Right cardiac atrium (tissue), 5 donors: ENCODE measurements at regions of chr14 and their contacts with region 1.

Region 1: DNA sequence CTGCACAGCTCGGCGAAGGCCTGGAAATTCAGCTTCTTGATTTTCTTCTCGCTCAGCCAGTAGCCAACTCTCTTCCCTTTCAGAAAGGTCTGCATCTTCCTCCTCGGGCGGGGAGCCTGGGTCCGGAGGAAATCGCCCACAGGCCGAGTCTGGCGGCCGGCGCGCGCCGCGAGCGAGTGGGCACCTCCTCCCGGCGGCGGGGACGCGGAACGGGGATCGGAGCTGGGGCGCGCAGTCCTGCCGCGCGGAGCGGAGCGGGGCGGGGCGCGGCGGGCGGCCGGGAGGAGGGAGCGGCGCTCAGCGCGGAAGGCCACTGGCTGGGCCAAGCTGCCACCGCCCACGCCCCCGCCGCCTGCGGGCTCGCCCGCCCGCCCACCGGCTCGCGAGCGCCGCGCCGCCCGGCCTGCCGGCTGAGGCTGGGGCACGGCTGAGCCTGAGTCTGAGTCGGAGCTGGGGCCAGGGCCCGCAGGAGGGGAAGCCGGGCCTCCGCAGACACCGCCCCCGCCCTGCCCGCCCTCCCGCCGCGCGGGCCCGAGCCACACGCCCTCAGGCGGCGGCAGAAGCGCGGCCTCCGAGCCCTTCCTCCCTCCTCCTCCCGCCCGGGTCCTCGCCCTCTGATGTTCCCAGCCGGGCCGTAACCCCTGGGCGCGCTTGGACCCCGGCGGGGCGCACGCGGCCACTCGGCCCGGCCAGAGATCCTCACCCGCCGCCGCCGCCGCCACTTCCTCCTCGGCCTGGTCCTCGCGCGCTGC is 480 bp downstream of the ITPK1 start:
- DNase-seq: peak; percentile 92 to 96 (median 96)
- ATAC-seq: peak; percentile 93 to 94
- H3K4me3 ChIP-seq: peak overlapping the region; percentile 80
- H3K27ac ChIP-seq: peak overlapping the region; percentile 100
- H3K4me1 ChIP-seq: peaks cover 7% of the 10 kb centered on the region
- H3K27me3 ChIP-seq: no peaks in the 10 kb centered on the region

Region 2: DNA sequence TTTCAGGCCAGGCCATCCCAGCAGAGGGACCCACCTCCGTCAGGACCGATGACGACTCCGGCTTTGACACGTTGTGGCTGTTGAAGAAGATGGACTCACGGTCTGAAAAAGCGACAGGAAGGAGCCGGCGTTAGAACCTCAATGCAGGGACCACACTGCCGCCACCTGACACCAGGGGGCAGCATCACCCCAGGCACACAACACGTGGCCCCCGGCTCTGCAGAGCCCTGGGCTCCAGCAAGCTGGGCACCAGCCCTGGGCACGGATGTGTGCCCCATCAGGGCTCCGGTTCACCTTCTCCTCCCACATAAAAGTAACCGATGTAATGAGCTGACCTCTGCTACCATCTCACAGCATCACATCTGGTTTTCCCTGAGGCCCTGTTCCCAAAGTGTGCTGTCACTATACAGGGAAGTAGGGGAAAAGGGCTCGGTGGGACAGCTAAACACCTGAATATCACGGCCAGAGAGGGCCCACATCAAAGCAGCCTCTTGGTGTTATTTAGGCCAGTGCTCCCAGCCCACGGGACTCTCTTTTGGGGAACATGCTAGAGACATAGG is 163.3 kb before region 1 on chr14:
- intact Hi-C with region 1: loop called in 1 of 4 experiments (anchors 5 kb)
- DNase-seq: peak; percentile 76 to 93 (median 92)
- ATAC-seq: peak; percentile 71 to 82
- H3K4me3 ChIP-seq: no peak overlapping the region
- H3K27ac ChIP-seq: peak overlapping the region; percentile 82
- H3K4me1 ChIP-seq: peaks cover 2% of the 10 kb centered on the region
- H3K27me3 ChIP-seq: no peaks in the 10 kb centered on the region

Region 3: DNA sequence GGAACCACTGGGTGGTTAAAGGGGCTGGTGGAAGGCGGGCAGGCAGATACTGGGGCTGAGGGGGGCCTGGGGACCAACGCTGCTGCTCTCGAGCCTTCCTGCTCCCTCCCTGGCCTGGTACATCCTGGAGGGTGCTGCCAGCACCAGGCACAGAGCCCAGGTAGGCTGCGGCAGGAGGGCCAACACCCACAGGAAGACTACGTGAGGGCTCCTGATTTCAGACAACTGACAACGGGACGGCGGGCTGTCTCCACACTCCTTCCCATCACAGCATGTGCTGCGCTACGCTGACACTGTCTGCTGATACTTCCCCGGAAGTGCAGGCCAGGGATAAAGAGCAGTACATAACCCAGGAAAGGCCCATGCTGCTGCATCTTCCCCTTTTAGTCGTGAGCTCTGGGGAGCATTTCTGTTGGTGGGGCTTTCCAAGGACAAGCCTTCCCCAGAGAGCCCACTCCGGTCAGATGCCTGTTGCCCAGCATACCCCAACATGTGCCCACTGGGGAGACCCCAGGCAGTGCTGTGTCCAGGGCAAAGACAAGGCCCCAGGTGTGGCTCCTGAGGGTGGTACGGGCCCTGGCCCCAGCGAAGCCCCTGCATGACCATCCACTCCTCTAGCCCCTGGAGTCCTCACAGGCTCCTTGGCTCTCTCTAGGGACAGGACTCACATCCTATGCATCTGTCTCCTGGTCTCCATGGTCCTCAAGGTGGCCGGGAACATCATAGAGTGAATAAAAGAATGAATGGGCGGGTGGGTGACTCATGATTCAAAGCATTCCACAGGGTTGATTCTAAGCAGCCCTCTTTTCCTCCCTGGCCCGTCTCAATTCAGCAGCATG is 154.3 kb before region 1 on chr14:
- intact Hi-C with region 1: loop called in 2 of 4 experiments (anchors 5 to 10 kb)
- DNase-seq: peak in 2 of 3 donors; percentile 16 to 42
- ATAC-seq: no peak
- H3K4me3 ChIP-seq: no peak overlapping the region
- H3K27ac ChIP-seq: no peak overlapping the region
- H3K4me1 ChIP-seq: peaks cover 3% of the 10 kb centered on the region
- H3K27me3 ChIP-seq: no peaks in the 10 kb centered on the region

Region 4: DNA sequence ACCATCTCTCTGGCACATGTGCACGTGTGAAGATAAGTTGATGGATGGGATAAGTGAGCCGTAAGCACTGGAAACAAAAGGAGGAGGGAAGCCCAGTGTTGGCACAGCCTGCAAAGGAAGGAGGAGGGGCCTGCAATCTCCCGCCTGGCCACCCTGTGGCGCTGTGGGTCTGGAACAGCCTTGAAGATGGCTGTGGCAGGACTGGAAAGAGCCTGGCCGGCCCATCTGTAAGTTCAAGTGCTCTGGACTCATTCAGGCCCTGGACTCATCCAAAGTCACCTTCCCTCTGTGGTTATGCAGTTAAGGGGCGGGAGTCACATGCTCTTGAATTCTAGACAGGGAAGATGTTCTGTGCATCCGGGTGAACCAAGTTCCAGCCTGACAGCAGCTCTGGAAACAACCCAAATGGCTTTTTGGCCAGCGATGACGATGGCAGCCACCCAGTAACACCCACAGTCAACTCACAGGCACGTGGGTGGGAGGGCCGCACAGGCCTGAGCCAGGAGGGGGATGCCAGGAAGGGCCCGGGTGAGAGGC is 141.9 kb before region 1 on chr14:
- intact Hi-C with region 1: loop called in 3 of 4 experiments (anchors 5 to 10 kb)
- DNase-seq: peak; percentile 75 to 93 (median 89)
- ATAC-seq: peak; percentile 91
- H3K4me3 ChIP-seq: no peak overlapping the region
- H3K27ac ChIP-seq: peak overlapping the region; percentile 89
- H3K4me1 ChIP-seq: peaks cover 5% of the 10 kb centered on the region
- H3K27me3 ChIP-seq: no peaks in the 10 kb centered on the region

Region 5: DNA sequence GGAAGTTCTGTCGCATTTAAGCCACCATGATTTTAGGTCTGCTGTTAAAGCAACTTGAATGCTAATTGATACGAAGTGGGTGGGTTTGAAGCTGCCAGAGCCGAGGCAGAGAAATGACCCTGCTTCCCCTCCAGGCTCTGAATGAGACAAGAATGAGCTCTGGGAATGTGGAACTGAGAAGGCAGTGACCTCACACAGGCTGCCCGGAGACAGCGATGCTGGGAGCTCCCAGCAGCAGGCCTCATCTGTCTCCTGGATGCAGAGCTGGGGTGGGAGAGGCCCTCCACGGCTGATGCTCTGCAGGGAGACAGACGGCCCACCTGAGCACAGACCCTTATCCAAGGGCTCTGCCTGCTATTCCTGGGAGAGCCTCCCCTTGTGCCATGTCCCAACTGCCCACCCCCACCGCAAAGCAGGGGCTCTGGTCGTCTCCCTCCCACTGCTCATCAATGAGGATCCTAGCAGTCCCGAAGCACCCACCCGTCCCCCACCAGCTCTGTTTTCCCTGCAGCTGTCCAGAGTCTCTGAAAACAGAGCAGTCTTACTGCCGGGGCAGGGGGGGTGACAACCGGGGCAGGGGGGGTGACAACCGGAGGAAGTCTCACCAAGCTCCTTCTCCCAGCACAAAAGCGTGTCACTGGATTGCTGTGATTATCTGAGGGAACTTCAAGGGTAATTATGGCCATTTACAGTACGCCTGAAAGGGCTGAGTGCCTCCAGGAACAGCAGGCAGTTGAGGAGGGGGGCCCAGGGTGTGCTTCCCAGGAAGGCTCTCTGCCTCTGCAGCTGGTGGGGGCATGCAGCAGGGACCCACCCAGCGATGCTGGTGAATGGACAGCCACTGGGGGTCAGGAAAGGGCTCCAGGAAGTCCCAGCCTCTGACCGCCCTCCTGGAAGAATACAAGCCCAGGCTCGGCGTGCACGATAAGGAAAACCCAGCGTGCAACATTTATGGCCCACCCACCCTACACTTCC is 124.5 kb before region 1 on chr14:
- intact Hi-C with region 1: no loop called
- DNase-seq: peak in 2 of 3 donors; percentile 50 to 69
- ATAC-seq: peak in 1 of 2 donors; percentile 21
- H3K4me3 ChIP-seq: no peak overlapping the region
- H3K27ac ChIP-seq: no peak overlapping the region
- H3K4me1 ChIP-seq: peaks cover 23% of the 10 kb centered on the region
- H3K27me3 ChIP-seq: no peaks in the 10 kb centered on the region

Region 6: DNA sequence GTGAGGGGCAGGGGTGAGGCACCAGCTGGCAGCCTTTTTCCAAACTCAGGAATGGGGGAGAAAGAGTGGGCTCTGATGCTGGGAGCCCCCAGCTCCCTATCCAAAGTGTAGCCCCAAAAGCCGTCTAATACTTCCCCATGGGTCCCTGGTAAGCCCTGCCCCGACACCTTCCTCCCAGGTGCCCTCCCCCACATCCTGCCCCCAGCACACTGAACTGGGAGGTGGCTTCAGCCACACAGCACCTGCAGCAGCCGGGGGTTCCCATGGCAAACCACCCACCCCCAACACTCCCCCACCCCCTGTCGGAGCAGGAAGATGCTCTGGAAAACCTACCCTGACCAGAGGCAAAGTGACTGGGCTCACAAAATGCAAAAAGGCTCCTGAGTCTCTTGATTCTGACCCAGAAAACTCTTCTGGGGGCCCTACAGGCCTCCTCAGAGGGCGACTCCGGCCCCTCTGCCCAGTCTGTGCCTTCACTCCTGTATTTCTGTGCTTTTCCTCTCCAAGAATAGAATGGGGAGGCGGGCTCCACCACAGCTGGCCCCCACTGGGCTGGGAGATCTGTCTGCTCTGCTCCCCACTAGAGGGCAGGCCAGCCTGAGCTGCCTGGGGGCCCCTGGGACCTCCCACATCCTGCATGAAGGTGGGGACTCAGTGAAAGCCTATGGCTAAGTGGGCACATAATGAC is 81.1 kb before region 1 on chr14:
- intact Hi-C with region 1: loop called in 1 of 4 experiments (anchors 10 kb)
- DNase-seq: peak in 1 of 3 donors; percentile 64
- ATAC-seq: peak; percentile 7 to 20
- H3K4me3 ChIP-seq: no peak overlapping the region
- H3K27ac ChIP-seq: no peak overlapping the region
- H3K4me1 ChIP-seq: peaks cover 12% of the 10 kb centered on the region
- H3K27me3 ChIP-seq: no peaks in the 10 kb centered on the region

Region 7: DNA sequence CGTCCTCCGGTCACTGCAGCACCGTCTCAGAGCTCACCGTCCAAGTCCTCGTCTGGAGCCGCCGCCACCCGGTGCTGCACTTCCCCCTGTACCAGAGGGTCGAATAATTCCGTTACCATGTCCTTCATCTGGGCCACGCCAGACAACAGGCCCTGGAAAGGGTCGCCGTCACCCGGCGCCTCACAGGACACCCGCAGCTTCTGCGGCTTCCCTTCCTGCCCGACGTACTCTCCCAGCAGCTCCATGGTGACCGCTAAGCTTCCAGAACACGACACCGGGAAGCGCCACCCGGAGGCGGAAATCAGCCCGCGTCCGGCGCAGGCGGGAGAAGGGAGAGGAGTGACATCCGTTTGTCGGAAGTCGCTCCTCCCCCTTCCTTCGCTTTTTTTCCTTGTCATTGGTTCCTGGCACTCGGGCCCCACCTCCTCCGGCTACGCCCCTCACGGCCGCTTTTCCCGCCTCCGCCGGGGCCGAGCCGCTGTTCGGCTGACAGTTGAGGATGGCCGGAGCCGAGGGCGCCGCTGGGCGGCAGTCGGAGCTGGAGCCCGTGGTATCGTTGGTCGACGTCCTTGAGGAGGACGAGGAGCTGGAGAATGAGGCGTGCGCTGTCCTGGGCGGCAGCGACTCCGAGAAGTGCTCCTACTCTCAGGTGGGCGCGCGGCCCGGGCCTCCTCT is 91.7 kb after region 1 on chr14 and contains the starts of genes GON7 and UBR7:
- intact Hi-C with region 1: no loop called
- DNase-seq: peak; percentile 94 to 97 (median 97)
- ATAC-seq: peak; percentile 99
- H3K4me3 ChIP-seq: peak within 1 kb of the TSS; percentile 70
- H3K27ac ChIP-seq: peak within 1 kb of the TSS; percentile 86
- H3K4me1 ChIP-seq: peaks cover 4% of the 10 kb centered on the region
- H3K27me3 ChIP-seq: no peaks in the 10 kb centered on the region
- total RNA-seq, gene GON7: 10.2 to 17.7 (median 14.1) TPM
- total RNA-seq, gene UBR7: 19.6 to 20.2 (median 19.9) TPM

Region 8: DNA sequence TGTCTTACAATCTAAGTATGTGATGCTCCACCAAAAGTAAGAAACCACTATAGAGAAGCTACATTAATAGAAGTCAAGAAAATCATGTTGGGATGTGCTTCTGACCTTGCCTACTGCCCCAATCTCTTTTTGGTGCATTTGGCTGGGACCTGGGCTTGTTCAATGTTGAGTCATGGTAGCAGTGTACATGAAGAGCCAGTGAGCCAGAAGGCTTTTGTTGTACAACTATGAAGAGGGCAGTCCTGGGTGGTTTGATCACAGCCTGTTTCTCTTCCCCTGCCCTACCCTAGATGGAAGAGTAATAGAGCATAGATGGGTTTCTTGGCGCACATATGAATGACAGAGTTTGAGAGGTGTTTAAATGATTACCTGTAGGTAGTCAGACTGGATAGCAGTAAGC is 148.2 kb after region 1 on chr14:
- intact Hi-C with region 1: no loop called
- DNase-seq: no peak
- ATAC-seq: no peak
- H3K4me3 ChIP-seq: no peak overlapping the region
- H3K27ac ChIP-seq: no peak overlapping the region
- H3K4me1 ChIP-seq: peaks cover 2% of the 10 kb centered on the region
- H3K27me3 ChIP-seq: no peaks in the 10 kb centered on the region